Activated CD4-positive, alpha-beta T cell treated with anti-CD3 and anti-CD28 coated beads for 36 hours (primary cell): ENCODE measurements at regions of chr5 and their contacts with region 1.

Region 1: DNA sequence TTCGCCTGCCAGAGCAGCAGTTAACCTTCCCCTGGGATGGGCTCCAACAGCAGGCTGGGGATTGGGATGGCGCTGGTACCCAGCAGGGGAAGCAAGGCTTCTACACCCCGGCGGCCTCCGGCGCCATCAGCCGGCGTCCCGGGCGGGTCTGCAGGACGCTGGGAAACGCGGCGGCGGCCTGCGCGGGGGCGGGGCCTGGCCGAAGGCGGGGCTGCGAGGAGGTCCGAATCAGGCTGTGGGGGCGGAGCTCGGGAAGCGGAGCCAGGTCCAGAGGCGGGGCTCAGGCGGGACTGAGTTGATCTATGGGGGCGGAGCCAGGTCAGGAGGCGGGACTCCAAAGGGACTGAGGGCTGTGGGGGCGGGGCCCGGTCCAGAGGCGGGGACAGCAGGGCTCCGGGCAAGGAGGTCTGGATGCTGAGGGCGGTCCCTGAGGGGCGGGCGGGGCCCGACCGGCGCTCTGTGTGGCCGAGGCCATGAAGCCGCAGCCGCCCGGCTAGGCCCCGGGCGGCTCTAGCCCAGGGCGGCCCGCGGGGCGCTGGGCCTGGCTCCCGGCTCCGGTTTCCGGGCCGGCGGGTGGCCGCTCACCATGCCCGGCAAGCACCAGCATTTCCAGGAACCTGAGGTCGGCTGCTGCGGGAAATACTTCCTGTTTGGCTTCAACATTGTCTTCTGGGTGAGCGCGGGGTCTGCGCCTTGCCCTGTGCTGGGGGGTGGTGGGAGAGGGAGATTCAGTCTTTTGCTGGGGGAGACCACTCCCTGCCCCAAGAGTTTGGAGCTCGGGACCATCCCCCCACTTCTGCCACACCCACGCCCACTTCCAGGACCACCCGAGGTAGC is at the start of gene TSPAN17:
- DNase-seq: peak; percentile 100
- ATAC-seq: peak; percentile 95
- H3K4me3 Mint-ChIP-seq: peak within 1 kb of the TSS; percentile 81
- H3K27ac Mint-ChIP-seq: peak within 1 kb of the TSS; percentile 87
- H3K4me1 Mint-ChIP-seq: peaks cover 36% of the 10 kb centered on the region
- H3K27me3 Mint-ChIP-seq: no peaks in the 10 kb centered on the region
- total RNA-seq, gene TSPAN17: 19.4 to 25.2 TPM

Region 2: DNA sequence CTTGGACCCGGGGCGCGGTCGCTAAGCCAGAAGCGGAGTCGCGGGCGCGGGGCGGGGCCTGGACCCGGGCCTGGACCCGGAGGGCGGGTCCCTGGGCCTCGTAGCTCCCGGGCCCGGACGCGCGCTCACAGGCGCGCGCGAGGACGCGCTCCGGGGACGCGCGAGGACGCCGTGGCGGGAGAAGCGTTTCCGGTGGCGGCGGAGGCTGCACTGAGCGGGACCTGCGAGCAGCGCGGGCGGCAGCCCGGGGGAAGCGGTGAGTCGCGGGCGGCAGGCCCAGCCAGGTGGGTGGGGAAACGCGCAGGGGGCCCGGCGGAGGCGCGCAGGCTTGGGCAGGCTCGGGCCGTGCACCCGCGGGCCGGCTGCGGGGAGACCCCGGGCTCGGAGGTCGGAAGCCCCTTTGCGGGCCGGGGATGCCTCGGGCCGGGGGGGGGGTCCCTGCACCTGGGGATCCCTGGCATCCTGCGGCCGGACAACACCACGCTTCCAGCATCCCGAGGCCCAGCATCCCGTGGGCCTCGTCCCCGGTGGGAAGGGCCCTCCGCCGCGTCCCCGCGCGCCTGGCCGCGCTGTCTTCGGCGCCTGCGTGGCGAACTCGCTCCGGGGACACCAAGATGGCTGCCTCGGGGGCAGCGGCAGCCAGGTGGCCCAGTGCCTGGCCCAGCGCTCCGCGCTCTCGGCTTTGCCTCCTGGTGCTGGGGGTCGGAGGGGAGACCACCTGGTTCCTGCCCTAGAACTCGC is 1168.7 kb before region 1 on chr5 and contains the start of gene SFXN1:
- CTCF ChIA-PET with region 1: no interaction called
- POLR2A ChIA-PET with region 1: no interaction called
- intact Hi-C with region 1: loop called in 1 of 2 experiments (anchors 1 kb)
- DNase-seq: peak; percentile 90
- ATAC-seq: peak; percentile 79
- H3K4me3 Mint-ChIP-seq: peak within 1 kb of the TSS; percentile 97
- H3K27ac Mint-ChIP-seq: peak within 1 kb of the TSS; percentile 99
- H3K4me1 Mint-ChIP-seq: peaks cover 47% of the 10 kb centered on the region
- H3K27me3 Mint-ChIP-seq: peaks cover 3% of the 10 kb centered on the region
- total RNA-seq, gene SFXN1: 322 to 433 TPM

Region 3: GRCh38 chr5:176447982-176448608 is 199.2 kb before region 1 on chr5 and contains the start of gene FAF2:
- CTCF ChIA-PET with region 1: interaction called, 5 read pairs
- POLR2A ChIA-PET with region 1: no interaction called
- intact Hi-C with region 1: loop called in 1 of 2 experiments (anchors 1 kb)
- DNase-seq: peak; percentile 98
- ATAC-seq: peak; percentile 98
- H3K4me3 Mint-ChIP-seq: peak within 1 kb of the TSS; percentile 90
- H3K27ac Mint-ChIP-seq: peak within 1 kb of the TSS; percentile 97
- H3K4me1 Mint-ChIP-seq: peaks cover 31% of the 10 kb centered on the region
- H3K27me3 Mint-ChIP-seq: no peaks in the 10 kb centered on the region
- total RNA-seq, gene FAF2: 37.6 to 44.8 TPM

Region 4: GRCh38 chr5:176501333-176501732 is 145.9 kb before region 1 on chr5:
- CTCF ChIA-PET with region 1: no interaction called
- POLR2A ChIA-PET with region 1: no interaction called
- intact Hi-C with region 1: no loop called
- DNase-seq: no peak
- ATAC-seq: no peak
- H3K4me3 Mint-ChIP-seq: no peak overlapping the region
- H3K27ac Mint-ChIP-seq: no peak overlapping the region
- H3K4me1 Mint-ChIP-seq: no peaks in the 10 kb centered on the region
- H3K27me3 Mint-ChIP-seq: no peaks in the 10 kb centered on the region

Region 5: DNA sequence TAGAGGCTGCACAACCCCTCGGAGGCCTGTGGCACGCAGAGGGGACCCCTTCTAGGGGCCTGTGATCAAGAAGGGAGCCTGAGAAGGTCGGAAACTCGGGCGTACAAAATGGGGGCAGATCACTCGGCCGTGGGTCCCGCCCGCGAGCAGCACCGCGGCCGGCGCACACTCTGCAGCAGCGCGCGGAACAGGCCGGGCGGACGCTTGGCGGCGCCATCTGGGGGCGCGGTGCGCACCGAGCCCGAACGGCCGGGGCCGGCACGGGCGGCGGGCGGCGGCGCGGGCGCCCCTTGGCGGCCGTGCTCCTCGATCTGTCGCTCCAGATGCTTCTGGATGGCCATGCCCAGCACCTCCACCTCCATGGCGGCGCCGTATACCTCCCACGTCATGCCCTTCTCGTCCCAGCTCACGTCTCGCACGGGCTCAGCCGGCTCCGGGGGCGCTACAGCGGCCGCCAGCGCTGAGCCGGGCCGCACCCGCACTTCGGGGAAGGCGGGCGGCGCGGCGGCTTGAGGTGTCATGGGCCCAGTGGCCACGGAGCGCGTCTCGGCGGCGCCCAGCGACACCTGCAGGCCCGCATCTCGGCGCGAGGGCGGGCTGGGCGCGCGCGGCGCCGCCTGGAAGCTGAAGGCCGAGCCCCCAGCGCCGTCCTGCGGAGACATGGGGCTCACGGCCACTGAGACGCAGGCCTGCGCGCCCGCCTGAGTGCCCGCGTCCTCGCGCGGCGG is 50.4 kb before region 1 on chr5:
- CTCF ChIA-PET with region 1: no interaction called
- POLR2A ChIA-PET with region 1: no interaction called
- intact Hi-C with region 1: no loop called
- DNase-seq: peak; percentile 81
- ATAC-seq: peak; percentile 87
- H3K4me3 Mint-ChIP-seq: peak overlapping the region; percentile 48
- H3K27ac Mint-ChIP-seq: peak overlapping the region; percentile 68
- H3K4me1 Mint-ChIP-seq: peaks cover 8% of the 10 kb centered on the region
- H3K27me3 Mint-ChIP-seq: peaks cover 2% of the 10 kb centered on the region

Region 6: DNA sequence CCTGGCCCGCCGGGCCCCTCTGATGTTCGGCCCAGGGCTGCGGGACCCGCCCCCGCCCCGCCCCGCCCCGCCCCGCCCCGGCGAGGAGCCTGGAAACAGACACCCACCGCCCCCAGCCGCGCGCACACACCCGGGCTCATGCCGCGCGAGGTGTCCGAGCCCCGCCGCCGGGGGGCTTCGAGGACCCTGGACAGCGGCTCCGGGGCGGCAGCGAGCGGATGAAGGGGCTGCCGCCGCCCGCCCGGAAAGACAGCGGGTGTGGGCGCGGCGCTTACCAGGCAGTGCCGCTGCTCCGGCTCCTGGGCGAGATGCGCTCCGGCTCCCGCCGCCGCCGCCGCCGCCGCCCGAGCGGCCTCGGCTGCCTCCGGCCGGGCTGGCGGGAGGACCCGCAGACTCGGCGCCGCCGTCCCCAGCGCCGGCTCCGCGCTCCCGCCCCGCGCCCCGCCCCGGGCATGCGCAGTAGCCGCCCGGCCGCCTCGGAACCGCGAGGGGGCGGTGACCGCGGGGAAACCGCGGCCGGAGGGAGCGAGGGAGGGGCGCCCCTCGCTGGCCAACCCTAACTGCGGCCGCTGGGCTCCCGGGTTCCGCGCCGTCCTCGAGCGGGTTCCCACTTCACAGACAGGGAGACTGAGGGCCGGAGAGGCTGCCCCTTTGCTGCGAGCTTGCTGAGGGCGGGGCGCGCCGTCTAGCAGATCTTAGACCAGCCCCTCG is 37.4 kb before region 1 on chr5 and contains the start of gene GPRIN1:
- CTCF ChIA-PET with region 1: interaction called, 4 read pairs
- POLR2A ChIA-PET with region 1: no interaction called
- intact Hi-C with region 1: loop called (anchors 1 to 2 kb)
- DNase-seq: peak; percentile 77
- ATAC-seq: peak; percentile 83
- H3K4me3 Mint-ChIP-seq: peak within 1 kb of the TSS; percentile 79
- H3K27ac Mint-ChIP-seq: no peak within 1 kb of the TSS
- H3K4me1 Mint-ChIP-seq: peaks cover 10% of the 10 kb centered on the region
- H3K27me3 Mint-ChIP-seq: peaks cover 28% of the 10 kb centered on the region
- total RNA-seq, gene GPRIN1: 3.8 to 4.1 TPM

Region 7: DNA sequence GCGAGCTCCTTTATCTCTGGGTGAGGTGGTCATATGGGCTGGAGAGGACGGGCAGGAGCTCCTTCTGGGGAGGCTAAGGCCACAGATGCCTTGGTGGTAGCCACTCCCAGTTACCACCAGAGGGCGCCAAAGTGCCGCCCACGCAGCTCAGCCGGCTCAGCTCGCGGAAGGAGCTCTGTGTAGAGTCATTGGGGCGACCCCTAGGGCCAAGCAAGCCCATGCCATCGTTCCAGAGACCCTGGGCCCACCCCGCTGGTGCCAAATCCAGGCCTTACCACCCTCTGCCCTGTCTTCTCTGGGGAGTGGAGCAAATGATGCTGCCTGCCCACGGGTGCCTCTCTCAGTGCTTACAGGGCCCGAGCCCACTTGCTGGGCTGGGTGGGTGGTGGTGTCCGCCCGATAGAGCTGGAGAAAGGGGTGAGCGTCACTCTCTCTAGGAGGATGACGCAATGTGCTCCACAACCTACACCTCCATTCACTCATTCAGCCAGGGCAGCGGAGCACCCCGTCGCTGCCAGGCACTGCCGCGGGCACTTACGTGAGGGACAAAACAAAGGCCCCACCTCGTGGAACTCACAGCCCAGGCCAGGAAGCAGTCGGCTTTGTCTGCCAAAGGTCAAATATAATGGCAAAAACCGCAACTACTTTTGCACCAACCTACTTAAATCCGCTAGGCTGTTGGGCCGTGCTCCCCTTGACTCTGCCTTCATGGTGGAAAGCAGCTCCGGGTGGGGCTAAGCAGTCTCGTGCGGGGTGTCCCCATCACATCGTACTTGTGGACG is 13.8 kb after region 1 on chr5:
- CTCF ChIA-PET with region 1: interaction called, 56 read pairs
- POLR2A ChIA-PET with region 1: no interaction called
- intact Hi-C with region 1: no loop called
- DNase-seq: peak; percentile 89
- ATAC-seq: peak; percentile 78
- H3K4me3 Mint-ChIP-seq: no peak overlapping the region
- H3K27ac Mint-ChIP-seq: no peak overlapping the region
- H3K4me1 Mint-ChIP-seq: peaks cover 29% of the 10 kb centered on the region
- H3K27me3 Mint-ChIP-seq: peaks cover 8% of the 10 kb centered on the region

Region 8: DNA sequence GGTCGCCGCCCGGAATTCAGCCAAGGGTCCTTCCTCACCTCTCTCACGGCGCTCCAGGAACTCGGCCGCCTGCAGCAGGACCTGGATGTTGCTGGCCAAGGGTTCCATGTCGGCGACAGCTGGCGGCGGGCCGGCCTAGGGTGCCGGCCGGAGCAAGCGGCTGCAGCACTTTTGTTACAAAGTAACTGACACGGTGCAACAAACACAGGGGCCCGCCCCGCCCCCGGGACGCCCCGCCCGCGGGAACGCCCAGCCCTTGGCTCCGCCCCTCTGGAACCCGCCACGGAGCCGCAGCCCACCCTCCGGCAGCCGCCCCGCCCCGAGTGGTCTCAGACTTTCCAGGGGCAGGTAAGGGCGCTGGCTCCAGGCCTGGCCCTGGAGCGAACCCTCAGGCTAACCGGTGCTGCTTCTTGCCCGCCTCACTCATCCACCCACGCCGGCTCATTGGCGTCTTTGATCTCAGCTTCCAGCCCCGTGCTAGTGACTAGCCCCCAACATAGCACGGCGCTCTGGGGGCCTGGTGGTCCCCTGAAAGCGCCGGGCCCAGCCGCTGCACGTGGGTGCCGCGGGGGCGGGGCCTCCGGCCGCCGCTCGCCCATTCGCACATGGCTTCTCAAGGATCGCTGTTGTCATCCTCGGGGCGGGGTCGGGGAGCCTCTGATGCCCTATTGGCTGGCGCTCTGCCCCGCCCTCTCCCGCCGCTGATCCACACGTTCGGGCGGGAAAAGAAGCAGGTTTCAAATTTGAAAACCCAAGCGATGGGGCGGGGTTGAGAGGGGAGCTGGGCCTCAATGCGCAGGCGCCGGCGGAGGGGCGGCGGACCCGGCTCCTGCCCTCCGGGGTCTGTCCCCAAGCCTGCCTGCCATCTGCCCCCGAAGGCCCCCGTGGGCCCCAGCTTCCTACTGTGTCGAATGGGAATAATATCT is 664.7 kb after region 1 on chr5 and contains the start of gene MXD3:
- CTCF ChIA-PET with region 1: interaction called, 3 read pairs
- POLR2A ChIA-PET with region 1: no interaction called
- intact Hi-C with region 1: loop called in 1 of 2 experiments (anchors 5 kb)
- DNase-seq: peak; percentile 99
- ATAC-seq: peak; percentile 88
- H3K4me3 Mint-ChIP-seq: peak within 1 kb of the TSS; percentile 85
- H3K27ac Mint-ChIP-seq: peak within 1 kb of the TSS; percentile 84
- H3K4me1 Mint-ChIP-seq: peaks cover 28% of the 10 kb centered on the region
- H3K27me3 Mint-ChIP-seq: no peaks in the 10 kb centered on the region
- total RNA-seq, gene MXD3: 21.3 to 27.2 TPM